Lower lobe of right lung (tissue), 2 donors: ENCODE measurements at regions of chr6 and their contacts with region 1.

Region 1: GRCh38 chr6:158969148-158969547 is 30.9 kb downstream of the RSPH3 start:
- DNase-seq: no peak
- ATAC-seq: no peak
- H3K4me3 ChIP-seq: no peak overlapping the region
- H3K27ac ChIP-seq: no peak overlapping the region
- H3K4me1 ChIP-seq: no peaks in the 10 kb centered on the region
- H3K27me3 ChIP-seq: no peaks in the 10 kb centered on the region
- CTCF ChIP-seq: no peak

Region 2: DNA sequence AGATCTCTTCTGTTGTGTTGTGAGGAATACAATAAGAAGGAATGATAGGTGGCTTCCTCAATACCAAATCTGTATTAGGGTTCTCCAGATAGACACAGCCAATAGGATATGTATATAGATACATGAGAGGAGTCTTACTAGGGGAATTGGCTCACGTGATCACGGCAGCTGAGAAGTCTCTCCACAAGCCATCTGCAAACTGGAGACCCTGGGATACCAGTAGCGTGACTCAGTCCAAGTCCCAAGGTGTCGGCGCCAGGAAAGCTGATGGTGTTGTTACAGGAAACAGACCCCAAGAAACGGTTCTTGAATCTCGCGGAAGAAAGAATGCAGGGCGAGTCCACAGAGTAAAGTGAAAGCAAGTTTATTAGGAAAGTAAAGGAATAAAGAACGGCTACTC is 257.9 kb before region 1 on chr6:
- intact Hi-C with region 1: loop called (anchors 5 kb)
- DNase-seq: no peak
- ATAC-seq: no peak
- H3K4me3 ChIP-seq: no peak overlapping the region
- H3K27ac ChIP-seq: peak overlapping the region; percentile 49
- H3K4me1 ChIP-seq: peaks cover 27% of the 10 kb centered on the region
- H3K27me3 ChIP-seq: no peaks in the 10 kb centered on the region
- CTCF ChIP-seq: no peak